ENCODE measurements at regions of chr11 and their contacts with region 1.

Region 1: DNA sequence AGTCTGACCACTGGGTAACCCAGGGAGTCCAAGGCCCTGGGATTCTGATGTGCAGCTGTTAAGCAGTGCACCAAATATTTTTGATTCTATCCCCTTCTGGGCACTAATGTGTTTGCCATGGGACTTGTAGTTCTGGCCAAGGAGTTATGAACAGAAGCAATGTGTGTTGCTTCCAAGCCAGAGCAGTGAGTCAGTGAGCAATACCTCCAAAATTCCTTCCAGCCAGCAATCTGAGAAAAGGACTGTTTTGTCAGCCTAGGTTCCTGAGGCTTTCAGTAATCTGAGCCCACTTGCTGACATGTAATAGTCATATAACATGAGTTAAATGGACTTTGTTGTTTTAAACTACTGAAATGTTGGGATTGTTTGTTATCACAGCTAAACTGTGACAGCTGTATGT is 311.4 kb downstream of the NELL1 start:
- DNase-seq: no peak
- H3K4me3 ChIP-seq: no peak overlapping the region
- H3K27ac ChIP-seq: no peak overlapping the region
- H3K4me1 ChIP-seq: no peaks in the 10 kb centered on the region
- H3K27me3 ChIP-seq: no peaks in the 10 kb centered on the region
- CTCF ChIP-seq: no peak

Region 2: DNA sequence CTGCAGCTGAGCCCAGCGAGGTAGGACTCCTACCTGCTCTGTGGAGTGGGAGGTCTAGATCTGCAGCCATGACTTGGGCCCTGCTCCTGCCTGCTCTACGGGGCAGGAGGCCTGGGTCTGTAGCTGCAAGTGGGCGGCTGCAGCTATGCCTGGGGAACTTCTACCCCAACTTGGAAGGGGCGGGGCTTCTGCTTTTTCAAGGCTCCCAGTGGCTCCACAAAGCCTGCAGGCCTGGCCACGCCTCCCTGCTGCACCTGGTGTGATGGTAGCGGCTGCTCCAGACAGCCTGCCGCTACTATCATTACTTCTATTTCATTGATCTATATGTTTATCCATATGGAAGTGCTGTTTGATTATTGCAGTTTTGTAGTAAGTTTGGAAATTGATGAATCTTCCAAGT is 190.1 kb before region 1 on chr11:
- CTCF ChIA-PET with region 1: no interaction called
- POLR2A ChIA-PET with region 1: interaction called, 18 read pairs
- intact Hi-C with region 1: no loop called
- DNase-seq: no peak
- H3K4me3 ChIP-seq: no peak overlapping the region
- H3K27ac ChIP-seq: no peak overlapping the region
- H3K4me1 ChIP-seq: no peaks in the 10 kb centered on the region
- H3K27me3 ChIP-seq: no peaks in the 10 kb centered on the region
- CTCF ChIP-seq: no peak

Region 3: DNA sequence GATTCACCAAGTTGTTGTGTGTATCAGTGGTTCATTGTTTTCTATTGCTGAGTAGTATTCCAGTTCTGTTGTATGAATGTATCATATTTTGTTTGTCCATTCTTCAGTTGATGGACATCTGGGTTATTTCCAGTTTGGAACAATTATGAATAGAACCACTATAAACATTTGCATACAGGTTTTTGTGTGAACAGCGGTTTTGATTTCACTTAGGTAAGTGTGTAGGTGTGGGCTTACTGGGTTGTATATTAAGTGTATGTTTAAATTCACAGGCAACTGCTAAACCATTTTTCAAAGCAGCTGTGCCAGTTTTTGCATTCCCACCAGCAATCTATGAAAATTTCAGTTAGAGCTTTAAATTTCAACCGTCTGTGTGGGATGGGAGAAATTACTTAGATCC is 93.6 kb before region 1 on chr11:
- CTCF ChIA-PET with region 1: no interaction called
- POLR2A ChIA-PET with region 1: no interaction called
- intact Hi-C with region 1: no loop called
- DNase-seq: no peak
- H3K4me3 ChIP-seq: no peak overlapping the region
- H3K27ac ChIP-seq: no peak overlapping the region
- H3K4me1 ChIP-seq: no peaks in the 10 kb centered on the region
- H3K27me3 ChIP-seq: no peaks in the 10 kb centered on the region
- CTCF ChIP-seq: no peak

Region 4: DNA sequence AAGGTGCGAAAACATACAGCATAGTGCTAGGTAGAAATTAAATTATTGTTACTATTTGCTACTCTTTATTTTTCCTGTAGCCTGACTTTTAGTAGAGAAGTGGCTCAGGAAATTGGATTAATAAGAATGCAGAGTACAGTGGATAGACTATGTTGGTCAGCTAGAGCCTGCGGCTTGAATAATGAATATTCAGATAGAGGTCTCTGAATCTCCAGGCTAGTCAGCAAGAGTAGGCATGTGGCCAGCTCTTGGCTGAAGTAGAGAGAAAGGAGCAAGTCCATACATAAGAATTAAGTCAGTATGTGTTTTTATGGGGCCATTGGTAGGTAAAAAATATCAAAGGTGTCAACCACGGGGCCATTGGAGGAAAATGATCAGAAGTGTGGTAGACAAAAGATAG is 102.1 kb after region 1 on chr11:
- CTCF ChIA-PET with region 1: no interaction called
- POLR2A ChIA-PET with region 1: no interaction called
- intact Hi-C with region 1: no loop called
- DNase-seq: no peak
- H3K4me3 ChIP-seq: no peak overlapping the region
- H3K27ac ChIP-seq: no peak overlapping the region
- H3K4me1 ChIP-seq: no peaks in the 10 kb centered on the region
- H3K27me3 ChIP-seq: no peaks in the 10 kb centered on the region
- CTCF ChIP-seq: no peak

Measured in A673 (cell line).